Activated CD8-positive, alpha-beta T cell treated with anti-CD3 and anti-CD28 coated beads for 36 hours (primary cell): ENCODE measurements at regions of chr6 and their contacts with region 1.

Region 1: GRCh38 chr6:33329058-33329457 is 11.5 kb upstream of the ZBTB22 start:
- DNase-seq: no peak
- ATAC-seq: no peak
- H3K4me3 Mint-ChIP-seq: no peak overlapping the region
- H3K27ac Mint-ChIP-seq: no peak overlapping the region
- H3K4me1 Mint-ChIP-seq: peaks cover 16% of the 10 kb centered on the region
- H3K27me3 Mint-ChIP-seq: no peaks in the 10 kb centered on the region
- CTCF ChIP-seq: no peak

Region 2: DNA sequence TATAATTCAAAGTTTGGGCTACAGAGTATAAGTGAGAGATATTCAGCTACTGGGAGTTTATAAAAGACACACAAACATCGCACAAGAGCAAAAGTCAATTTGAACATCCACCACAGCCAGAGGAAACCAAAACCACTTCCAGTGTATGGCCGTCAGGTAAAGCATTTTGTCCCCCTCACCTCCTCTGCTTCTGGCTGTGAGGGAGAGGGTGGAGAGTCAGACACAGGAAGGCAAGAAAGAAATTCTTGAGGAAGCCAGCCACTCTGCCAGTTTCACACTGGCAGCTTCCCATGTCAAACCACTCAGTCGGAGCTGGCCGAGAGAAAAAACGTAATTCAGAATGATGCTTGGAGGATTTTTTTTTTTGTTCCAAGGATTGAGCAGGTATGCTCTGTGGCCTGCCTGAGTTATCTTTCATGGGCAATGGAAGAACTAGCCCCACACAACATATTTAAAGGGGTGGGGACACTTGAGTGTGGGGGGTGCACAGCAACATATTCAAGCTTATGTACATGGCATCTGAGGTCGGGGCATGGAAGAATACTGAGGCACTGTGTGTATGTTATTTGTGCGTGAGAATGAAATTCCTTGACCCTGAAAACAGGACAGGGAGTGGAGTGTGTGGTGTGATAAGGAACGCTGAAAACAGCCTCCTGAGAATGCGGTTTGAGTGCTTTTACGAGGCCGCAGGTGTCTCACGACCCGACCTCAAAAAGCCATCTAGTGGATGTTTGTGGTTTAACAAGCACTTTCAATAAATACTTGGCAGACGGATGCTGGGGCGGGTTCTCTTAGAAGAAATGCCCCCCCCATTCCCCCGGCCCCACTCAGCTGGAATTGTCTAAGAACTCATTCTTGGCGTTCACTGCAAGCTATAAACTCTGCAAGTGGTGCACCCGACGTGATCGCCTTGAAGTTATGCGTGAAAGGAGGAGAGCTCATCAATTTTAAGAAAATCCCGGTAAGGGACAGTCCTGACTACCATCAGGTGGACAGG is 15.9 kb after region 1 on chr6:
- CTCF ChIA-PET with region 1: interaction called, 14 read pairs
- POLR2A ChIA-PET with region 1: interaction called, 3 read pairs
- intact Hi-C with region 1: no loop called
- DNase-seq: peak; percentile 83
- ATAC-seq: peak; percentile 68
- H3K4me3 Mint-ChIP-seq: peak overlapping the region; percentile 51
- H3K27ac Mint-ChIP-seq: peak overlapping the region; percentile 75
- H3K4me1 Mint-ChIP-seq: peaks cover 18% of the 10 kb centered on the region
- H3K27me3 Mint-ChIP-seq: no peaks in the 10 kb centered on the region
- CTCF ChIP-seq: peak; percentile 71